Dendritic cell treated with granulocyte-macrophage colony-stimulating factor and Interleukin-4, amounts not matched to agents 40 ng/mL and 50 ng/mL, for 4 days (primary cell): ENCODE measurements at regions of chr18 and their contacts with region 1.

Region 1: DNA sequence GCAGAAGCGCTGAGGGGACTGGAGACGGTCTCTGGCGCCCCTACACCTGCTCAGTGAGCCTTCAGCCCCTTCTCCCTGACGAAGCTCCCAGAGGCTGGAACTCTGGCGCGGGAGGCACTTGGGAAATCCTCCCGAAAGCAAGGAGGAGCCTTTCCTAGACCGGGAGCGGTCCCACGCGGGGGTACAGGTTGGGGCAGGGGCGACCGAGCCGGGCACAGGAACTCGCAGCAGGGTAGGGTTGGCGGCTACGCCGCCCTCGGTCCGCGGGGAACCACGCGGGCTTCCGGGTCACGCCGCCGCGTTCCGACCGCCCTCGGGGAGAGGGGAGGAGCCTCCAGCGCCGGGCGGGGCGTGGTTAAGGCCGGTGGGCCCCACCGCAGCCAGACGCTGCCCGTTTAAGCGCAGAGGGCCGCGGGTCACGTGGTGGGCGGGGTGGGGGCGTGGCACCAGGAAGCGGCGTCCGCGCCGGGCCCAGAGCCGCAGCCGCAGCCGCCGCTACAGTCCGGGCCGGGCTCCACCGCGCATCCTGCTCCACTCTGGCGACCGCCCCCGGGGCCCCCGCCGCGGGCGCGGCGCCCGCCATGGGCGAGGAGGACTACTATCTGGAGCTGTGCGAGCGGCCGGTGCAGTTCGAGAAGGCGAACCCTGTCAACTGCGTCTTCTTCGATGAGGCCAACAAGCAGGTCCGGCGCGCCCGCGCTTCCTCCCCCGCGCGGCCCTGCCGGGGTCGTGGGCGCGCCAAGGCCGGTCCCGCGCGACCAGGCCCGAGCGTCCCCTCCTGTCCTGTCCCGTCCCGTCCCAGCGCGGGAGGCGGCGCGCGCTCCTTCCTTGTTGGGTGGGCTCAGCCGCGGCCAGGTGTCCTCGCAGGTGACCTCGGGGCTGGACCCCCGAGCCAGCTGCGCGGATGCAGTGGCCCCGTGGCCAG is at the start of gene RMC1:
- H3K4me3 Mint-ChIP-seq: peak within 1 kb of the TSS; percentile 93
- H3K27ac Mint-ChIP-seq: peak within 1 kb of the TSS; percentile 97
- H3K4me1 Mint-ChIP-seq: peaks cover 46% of the 10 kb centered on the region
- H3K27me3 Mint-ChIP-seq: no peaks in the 10 kb centered on the region

Region 2: DNA sequence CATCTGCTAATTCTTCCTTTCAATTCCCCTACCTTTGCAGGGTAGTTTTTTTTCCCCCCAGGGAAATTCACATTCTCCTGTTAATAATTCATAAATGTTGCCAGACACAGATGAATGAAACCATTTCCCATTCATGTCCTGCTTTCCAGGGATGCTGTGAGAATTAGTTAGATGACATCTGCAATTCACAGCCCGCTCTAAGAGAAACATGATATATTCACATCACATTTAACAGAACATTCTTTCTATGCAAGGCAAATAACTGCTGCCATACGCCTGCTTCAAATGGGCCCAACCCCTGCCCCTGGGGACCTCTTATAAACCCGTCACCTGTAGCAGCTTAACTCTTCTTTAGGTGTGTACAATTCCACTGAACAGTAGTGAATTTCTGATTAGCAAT is 975.0 kb before region 1 on chr18:
- intact Hi-C with region 1: no loop called
- H3K4me3 Mint-ChIP-seq: no peak overlapping the region
- H3K27ac Mint-ChIP-seq: no peak overlapping the region
- H3K4me1 Mint-ChIP-seq: no peaks in the 10 kb centered on the region
- H3K27me3 Mint-ChIP-seq: no peaks in the 10 kb centered on the region

Region 3: GRCh38 chr18:23586249-23587196 is 83.2 kb after region 1 on chr18 and contains the start of gene NPC1:
- intact Hi-C with region 1: loop called (anchors 2 kb)
- H3K4me3 Mint-ChIP-seq: peak within 1 kb of the TSS; percentile 89
- H3K27ac Mint-ChIP-seq: peak within 1 kb of the TSS; percentile 96
- H3K4me1 Mint-ChIP-seq: peaks cover 47% of the 10 kb centered on the region
- H3K27me3 Mint-ChIP-seq: peaks cover 11% of the 10 kb centered on the region

Region 4: GRCh38 chr18:23703057-23703986 is 200.0 kb after region 1 on chr18:
- intact Hi-C with region 1: loop called (anchors 10 kb)
- H3K4me3 Mint-ChIP-seq: no peak overlapping the region
- H3K27ac Mint-ChIP-seq: no peak overlapping the region
- H3K4me1 Mint-ChIP-seq: peaks cover 5% of the 10 kb centered on the region
- H3K27me3 Mint-ChIP-seq: peaks cover 18% of the 10 kb centered on the region

Region 5: DNA sequence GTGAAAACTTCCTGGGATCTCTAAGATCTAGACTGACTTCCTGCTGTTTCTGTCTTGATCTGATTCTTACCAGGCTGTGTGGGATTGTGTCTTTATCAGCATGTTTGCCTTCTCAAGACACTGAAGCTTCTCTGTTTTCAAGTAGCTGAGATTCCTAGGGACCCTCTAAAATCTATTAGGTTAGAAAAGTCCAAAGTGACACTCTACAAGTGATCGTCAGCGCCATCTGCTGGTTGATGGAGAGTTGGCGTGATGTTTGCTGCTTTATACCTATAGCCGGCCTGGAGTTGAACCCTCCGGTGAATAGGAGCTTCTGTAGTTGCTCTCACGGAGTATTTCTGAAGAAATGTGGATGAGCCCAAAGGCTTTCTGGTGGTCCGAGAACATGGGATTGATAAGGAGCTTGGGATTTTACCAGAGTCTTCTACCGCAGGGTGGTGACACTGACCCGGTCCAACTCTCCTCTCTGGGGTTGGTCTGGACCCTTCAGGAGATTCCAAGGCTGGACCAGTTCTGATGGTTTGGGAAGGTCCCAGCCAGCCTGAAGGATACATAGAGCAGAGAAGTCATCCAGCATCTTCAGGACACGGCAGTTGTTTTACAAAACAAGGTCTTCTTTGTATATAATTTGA is 415.2 kb after region 1 on chr18:
- intact Hi-C with region 1: loop called (anchors 5 kb)
- H3K4me3 Mint-ChIP-seq: no peak overlapping the region
- H3K27ac Mint-ChIP-seq: no peak overlapping the region
- H3K4me1 Mint-ChIP-seq: no peaks in the 10 kb centered on the region
- H3K27me3 Mint-ChIP-seq: peaks cover 9% of the 10 kb centered on the region